Activated naive CD4-positive, alpha-beta T cell treated with anti-CD3 and anti-CD28 coated beads for 36 hours (primary cell): ENCODE measurements at regions of chr3 and their contacts with region 1.

Region 1: DNA sequence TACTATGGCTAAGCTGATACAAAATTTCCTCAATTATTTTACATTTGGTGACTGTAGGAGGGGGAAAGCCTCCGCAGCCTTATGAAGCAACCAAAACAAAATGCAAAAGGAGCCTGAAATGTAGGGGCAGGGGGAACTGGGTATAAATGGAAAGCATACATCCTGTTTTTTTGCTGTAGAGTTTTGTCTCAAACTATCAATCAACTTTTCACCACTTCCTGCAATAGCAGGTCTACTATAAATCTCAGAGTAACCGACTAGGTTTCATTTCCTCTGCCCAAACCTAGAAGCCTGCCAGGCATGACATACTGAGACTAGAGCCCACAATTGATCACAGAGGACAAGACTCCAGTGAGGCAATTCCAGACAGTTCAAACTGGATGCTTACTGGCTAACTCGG is 91.3 kb downstream of the SHQ1 start:
- DNase-seq: peak; percentile 73
- H3K4me3 Mint-ChIP-seq: peak overlapping the region; percentile 17
- H3K27ac Mint-ChIP-seq: peak overlapping the region; percentile 83
- H3K4me1 Mint-ChIP-seq: peaks cover 74% of the 10 kb centered on the region
- H3K27me3 Mint-ChIP-seq: no peaks in the 10 kb centered on the region

Region 2: GRCh38 chr3:72347819-72348319 is 409.0 kb before region 1 on chr3:
- CTCF ChIA-PET with region 1: no interaction called
- intact Hi-C with region 1: loop called (anchors 5 kb)
- DNase-seq: peak; percentile 72
- H3K4me3 Mint-ChIP-seq: no peak overlapping the region
- H3K27ac Mint-ChIP-seq: no peak overlapping the region
- H3K4me1 Mint-ChIP-seq: peaks cover 55% of the 10 kb centered on the region
- H3K27me3 Mint-ChIP-seq: no peaks in the 10 kb centered on the region

Region 3: GRCh38 chr3:72492240-72492639 is 264.7 kb before region 1 on chr3:
- CTCF ChIA-PET with region 1: no interaction called
- intact Hi-C with region 1: no loop called
- DNase-seq: no peak
- H3K4me3 Mint-ChIP-seq: no peak overlapping the region
- H3K27ac Mint-ChIP-seq: no peak overlapping the region
- H3K4me1 Mint-ChIP-seq: peaks cover 15% of the 10 kb centered on the region
- H3K27me3 Mint-ChIP-seq: no peaks in the 10 kb centered on the region

Region 4: GRCh38 chr3:72682936-72683452 is 73.9 kb before region 1 on chr3:
- CTCF ChIA-PET with region 1: no interaction called
- intact Hi-C with region 1: loop called (anchors 2 kb)
- DNase-seq: peak; percentile 48
- H3K4me3 Mint-ChIP-seq: no peak overlapping the region
- H3K27ac Mint-ChIP-seq: no peak overlapping the region
- H3K4me1 Mint-ChIP-seq: peaks cover 13% of the 10 kb centered on the region
- H3K27me3 Mint-ChIP-seq: no peaks in the 10 kb centered on the region

Region 5: GRCh38 chr3:72722930-72723726 is 33.8 kb before region 1 on chr3:
- CTCF ChIA-PET with region 1: no interaction called
- intact Hi-C with region 1: loop called (anchors 1 kb)
- DNase-seq: peak; percentile 27
- H3K4me3 Mint-ChIP-seq: no peak overlapping the region
- H3K27ac Mint-ChIP-seq: no peak overlapping the region
- H3K4me1 Mint-ChIP-seq: peaks cover 17% of the 10 kb centered on the region
- H3K27me3 Mint-ChIP-seq: no peaks in the 10 kb centered on the region

Region 6: DNA sequence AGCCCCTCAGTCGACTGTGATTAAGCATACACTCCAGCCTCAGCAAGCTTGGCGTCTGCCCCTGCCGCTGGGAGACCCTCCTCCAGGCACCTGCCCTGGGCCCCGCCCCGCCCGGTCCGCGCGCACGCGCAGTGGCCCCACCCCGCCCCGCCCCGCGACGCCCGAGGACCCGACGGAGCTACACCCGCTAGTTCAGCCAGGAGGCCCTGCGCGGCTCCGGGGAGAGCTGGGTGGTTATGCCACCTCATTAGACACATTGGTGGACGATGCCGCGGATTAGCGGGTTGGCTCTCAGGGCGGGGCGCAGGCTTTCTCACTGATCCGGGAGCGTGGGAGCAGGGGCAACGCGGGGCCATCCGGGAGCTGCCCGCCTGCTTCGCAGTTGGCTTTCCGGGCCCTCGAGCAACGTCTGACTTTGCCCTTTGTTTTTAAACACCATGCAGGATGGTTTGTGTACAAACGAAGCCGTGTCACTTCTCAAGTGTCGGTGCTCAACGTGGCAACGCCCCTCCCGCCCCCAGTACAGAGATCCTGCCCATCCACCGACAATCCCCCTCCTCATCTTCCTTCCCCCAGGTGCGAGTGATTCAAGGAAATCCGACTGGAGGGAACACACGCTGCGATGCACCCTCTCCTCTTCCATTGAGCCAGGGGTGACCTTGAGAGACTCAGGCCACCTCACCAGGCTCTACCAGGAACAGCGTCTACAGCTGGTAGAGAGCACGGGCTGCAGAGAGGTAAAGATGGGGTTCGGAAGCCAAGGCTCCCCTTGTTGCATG is 18.0 kb before region 1 on chr3:
- CTCF ChIA-PET with region 1: interaction called, 3 read pairs
- intact Hi-C with region 1: loop called (anchors 1 kb)
- DNase-seq: peak; percentile 85
- H3K4me3 Mint-ChIP-seq: peak overlapping the region; percentile 83
- H3K27ac Mint-ChIP-seq: peak overlapping the region; percentile 51
- H3K4me1 Mint-ChIP-seq: peaks cover 21% of the 10 kb centered on the region
- H3K27me3 Mint-ChIP-seq: no peaks in the 10 kb centered on the region